ENCODE measurements at regions of chr15 and their contacts with region 1.

Region 1: DNA sequence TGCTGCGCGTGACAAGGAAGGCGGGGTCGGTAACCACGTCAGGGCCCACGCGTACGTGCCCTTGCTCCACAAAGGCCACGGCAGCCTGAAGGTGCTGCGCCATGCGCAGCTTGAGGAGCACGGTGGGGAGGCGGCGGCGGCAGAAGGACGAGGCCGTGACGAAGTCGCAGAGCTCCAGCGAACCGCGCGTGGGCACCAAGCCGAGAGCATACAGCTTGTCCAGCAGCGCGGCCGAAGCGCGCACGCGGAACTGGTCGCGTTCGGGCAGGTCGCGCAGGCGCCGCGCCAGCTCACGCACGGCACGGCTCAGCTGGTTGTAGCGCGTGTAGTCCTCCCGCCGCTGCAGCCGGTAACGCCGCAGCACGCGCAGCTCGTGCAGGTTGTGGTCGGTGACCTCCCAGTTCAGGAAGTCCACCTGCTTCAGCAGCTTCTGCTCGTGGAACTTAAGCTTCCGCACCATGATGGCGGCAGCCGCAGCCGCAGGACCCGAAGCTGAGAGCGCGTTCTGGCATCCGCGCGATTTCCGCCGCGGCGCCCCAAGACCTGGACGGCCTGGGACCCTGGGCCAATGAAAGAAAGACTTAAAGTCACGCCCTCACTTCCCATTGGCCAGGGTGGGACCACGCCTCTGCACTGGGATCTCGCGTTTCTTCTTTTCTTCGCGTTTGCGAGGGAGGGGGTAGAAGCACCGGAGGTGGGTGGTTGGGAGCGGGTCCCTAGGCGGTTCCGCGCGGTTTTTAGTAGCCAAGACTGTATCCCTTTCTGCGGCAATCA is at the start of gene IMP3:
- DNase-seq: peak; percentile 97
- H3K4me3 Mint-ChIP-seq: peak within 1 kb of the TSS; percentile 96
- H3K27ac Mint-ChIP-seq: peak within 1 kb of the TSS; percentile 96
- H3K4me1 Mint-ChIP-seq: peaks cover 46% of the 10 kb centered on the region
- H3K27me3 Mint-ChIP-seq: peaks cover 12% of the 10 kb centered on the region

Region 2: DNA sequence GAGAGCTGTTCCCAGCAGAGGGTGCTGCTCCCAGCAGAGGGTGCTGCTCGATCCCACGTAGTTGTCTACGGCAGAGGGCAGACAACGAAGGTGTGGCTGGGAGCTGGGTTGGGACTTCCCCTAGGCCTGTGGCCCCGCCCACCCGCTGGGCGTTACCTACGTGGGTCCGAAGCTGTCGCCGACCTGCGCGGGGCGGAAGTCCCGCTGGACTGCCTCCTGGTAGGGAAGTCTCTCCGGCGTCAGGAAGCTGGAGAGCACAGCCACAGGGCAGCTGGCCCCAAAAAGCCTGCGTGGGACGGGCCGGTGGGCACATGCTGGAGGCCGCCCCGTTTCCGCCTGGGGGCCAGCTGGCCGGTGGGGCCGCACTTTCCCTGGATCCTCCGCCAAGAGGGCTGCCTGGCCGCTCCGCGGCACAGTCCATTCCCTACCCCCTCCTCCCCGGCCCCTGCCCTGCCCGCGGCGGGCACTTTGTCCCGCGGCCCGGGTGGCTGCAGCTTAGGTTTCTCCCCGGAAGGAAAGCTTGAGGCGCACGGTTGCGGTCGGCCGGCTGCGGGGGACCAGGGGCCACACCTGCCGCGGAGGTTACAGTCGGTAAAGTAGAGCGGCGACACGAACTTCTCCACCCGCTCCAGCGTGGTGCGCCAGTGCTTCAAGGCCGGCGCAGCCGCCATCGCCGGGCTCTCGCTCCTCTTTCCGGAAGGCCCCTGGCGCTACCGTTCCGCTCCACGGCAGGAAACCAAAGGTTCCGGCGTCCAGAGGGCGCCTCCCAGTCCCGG is 271.8 kb before region 1 on chr15 and contains the start of gene MAN2C1:
- CTCF ChIA-PET with region 1: interaction called, 53 read pairs
- DNase-seq: peak; percentile 96
- H3K4me3 Mint-ChIP-seq: peak within 1 kb of the TSS; percentile 88
- H3K27ac Mint-ChIP-seq: peak within 1 kb of the TSS; percentile 97
- H3K4me1 Mint-ChIP-seq: peaks cover 30% of the 10 kb centered on the region
- H3K27me3 Mint-ChIP-seq: peaks cover 3% of the 10 kb centered on the region

Region 3: DNA sequence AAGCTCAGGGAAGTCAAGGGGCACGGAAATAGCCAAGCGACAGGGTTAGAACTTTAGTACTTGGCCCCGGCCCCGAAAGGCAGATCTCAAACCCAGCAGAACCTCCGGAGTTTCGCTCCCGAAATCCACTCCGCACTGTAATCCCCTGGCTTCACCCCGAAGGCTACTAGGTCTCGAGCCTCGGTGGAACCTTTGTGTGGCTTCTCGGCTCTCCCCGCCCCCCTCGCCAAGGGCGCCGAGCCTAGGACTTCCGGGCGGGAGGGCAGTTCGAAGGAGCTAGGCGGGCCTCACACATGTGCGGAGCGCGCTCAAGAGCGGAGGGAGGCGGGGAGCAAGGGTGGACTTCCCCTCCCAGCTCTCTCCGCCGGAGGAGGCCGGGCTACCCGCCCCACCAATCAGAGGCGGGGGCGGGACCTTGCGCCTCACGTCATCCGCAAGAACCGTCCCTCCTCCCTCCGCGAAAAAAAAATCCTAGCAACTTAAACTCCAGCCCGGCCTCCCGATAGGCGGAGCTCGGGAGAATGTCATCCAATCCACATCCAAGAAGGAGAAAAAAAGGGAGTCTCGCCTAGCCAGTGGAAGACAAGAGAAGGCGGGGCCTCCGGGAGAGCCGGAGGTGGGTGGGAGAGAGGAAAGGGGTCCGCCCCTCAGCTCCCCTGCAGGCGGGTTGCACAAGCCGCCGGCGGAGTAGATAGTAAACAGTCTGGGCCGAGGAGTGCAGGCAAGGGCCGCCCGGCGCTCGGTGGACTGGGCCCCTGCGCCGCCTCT is 186.0 kb before region 1 on chr15:
- CTCF ChIA-PET with region 1: interaction called, 27 read pairs
- DNase-seq: peak; percentile 98
- H3K4me3 Mint-ChIP-seq: peak overlapping the region; percentile 89
- H3K27ac Mint-ChIP-seq: peak overlapping the region; percentile 100
- H3K4me1 Mint-ChIP-seq: peaks cover 29% of the 10 kb centered on the region
- H3K27me3 Mint-ChIP-seq: no peaks in the 10 kb centered on the region

Region 4: GRCh38 chr15:75508840-75509532 is 130.9 kb before region 1 on chr15:
- CTCF ChIA-PET with region 1: interaction called, 18 read pairs
- DNase-seq: peak; percentile 43
- H3K4me3 Mint-ChIP-seq: no peak overlapping the region
- H3K27ac Mint-ChIP-seq: peak overlapping the region; percentile 37
- H3K4me1 Mint-ChIP-seq: peaks cover 2% of the 10 kb centered on the region
- H3K27me3 Mint-ChIP-seq: no peaks in the 10 kb centered on the region

Region 5: GRCh38 chr15:75578948-75579920 is 60.7 kb before region 1 on chr15 and contains the start of gene PTPN9:
- CTCF ChIA-PET with region 1: interaction called, 15 read pairs
- DNase-seq: peak; percentile 84
- H3K4me3 Mint-ChIP-seq: peak within 1 kb of the TSS; percentile 92
- H3K27ac Mint-ChIP-seq: peak within 1 kb of the TSS; percentile 88
- H3K4me1 Mint-ChIP-seq: peaks cover 29% of the 10 kb centered on the region
- H3K27me3 Mint-ChIP-seq: no peaks in the 10 kb centered on the region

Region 6: GRCh38 chr15:75597667-75598341 is 42.1 kb before region 1 on chr15:
- CTCF ChIA-PET with region 1: interaction called, 61 read pairs
- DNase-seq: peak; percentile 77
- H3K4me3 Mint-ChIP-seq: peak overlapping the region; percentile 56
- H3K27ac Mint-ChIP-seq: peak overlapping the region; percentile 90
- H3K4me1 Mint-ChIP-seq: peaks cover 42% of the 10 kb centered on the region
- H3K27me3 Mint-ChIP-seq: no peaks in the 10 kb centered on the region

Region 7: GRCh38 chr15:75625542-75626347 is 14.2 kb before region 1 on chr15 and contains the start of gene SNUPN:
- CTCF ChIA-PET with region 1: interaction called, 15 read pairs
- DNase-seq: peak; percentile 97
- H3K4me3 Mint-ChIP-seq: peak within 1 kb of the TSS; percentile 87
- H3K27ac Mint-ChIP-seq: peak within 1 kb of the TSS; percentile 97
- H3K4me1 Mint-ChIP-seq: peaks cover 50% of the 10 kb centered on the region
- H3K27me3 Mint-ChIP-seq: no peaks in the 10 kb centered on the region